ENCODE measurements at regions of chr6 and their contacts with region 1.

Region 1: GRCh38 chr6:34608321-34609091 is 52.4 kb upstream of the SPDEF start:
- DNase-seq: no peak
- H3K4me3 ChIP-seq: no peak overlapping the region
- H3K27ac ChIP-seq: no peak overlapping the region
- H3K4me1 ChIP-seq: no peaks in the 10 kb centered on the region
- H3K27me3 ChIP-seq: no peaks in the 10 kb centered on the region
- CTCF ChIP-seq: no peak

Region 2: GRCh38 chr6:34526992-34527728 is 81.3 kb before region 1 on chr6:
- intact Hi-C with region 1: loop called (anchors 2 kb)
- DNase-seq: peak; percentile 98
- H3K4me3 ChIP-seq: peak overlapping the region; percentile 12
- H3K27ac ChIP-seq: no peak overlapping the region
- H3K4me1 ChIP-seq: no peaks in the 10 kb centered on the region
- H3K27me3 ChIP-seq: no peaks in the 10 kb centered on the region
- CTCF ChIP-seq: peak; percentile 55

Measured in colonic mucosa (tissue), 4 donors.